A549 (cell line): ENCODE measurements at regions of chr2 and their contacts with region 1.

Region 1: GRCh38 chr2:84919885-84920580 is 14.6 kb downstream of the TMSB10 start:
- DNase-seq: peak; percentile 88 to 98
- ATAC-seq: peak; percentile 92 to 97
- H3K4me3 ChIP-seq: 0 out of 3 replicates have a peak overlapping the region, but pooled peaks have one; percentile 1
- H3K27ac ChIP-seq: peak overlapping the region; percentile 84 to 96
- H3K4me1 ChIP-seq: peaks cover 33% of the 10 kb centered on the region
- CTCF ChIP-seq: no peak
- EP300 ChIP-seq: peak; percentile 34 to 72; a peak in 2 of 5 replicates
- POLR2A ChIP-seq: no peak
- RAD21 ChIP-seq: no peak

Region 2: DNA sequence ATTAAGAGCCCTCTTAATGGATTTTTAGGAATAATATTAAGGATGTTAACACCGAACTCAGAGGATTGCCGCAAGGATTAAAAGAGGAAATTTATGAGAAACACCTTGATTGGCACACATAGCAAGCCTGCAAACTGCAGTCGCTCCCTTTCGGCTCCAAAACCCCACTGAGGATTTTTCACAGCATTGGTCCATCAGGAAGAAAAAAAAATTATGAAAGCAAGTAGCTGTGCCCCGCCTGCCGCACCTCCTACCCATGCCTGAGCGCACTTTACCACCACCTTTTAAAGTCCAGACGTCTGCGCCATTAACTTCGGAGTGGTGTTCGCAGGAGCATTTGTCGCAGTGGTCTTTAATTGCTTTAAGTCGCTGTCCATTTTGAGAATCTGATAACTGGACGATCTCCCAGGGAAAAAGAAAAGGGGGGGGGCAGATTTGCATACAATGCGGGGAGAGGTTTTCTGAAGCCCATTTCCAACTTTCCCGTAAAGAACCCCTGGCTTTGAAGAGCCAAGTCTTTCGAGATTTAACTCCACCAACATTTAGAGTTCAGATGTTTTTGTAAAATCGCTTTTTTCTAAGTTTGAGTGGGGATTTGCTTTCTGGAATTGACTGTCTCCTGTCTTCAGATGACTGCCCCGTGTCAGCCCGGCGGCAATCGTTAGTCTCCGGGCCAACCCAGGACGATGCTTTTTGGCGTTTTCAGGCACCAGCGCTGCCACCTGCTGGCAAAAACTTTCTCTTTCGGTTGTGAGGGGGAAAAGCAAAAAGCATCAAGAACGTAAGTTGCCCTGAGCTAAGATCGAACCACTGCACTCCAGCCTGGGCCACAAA is 38.2 kb before region 1 on chr2:
- CTCF ChIA-PET with region 1: interaction called, 41 read pairs
- POLR2A ChIA-PET with region 1: no interaction called
- DNase-seq: peak; percentile 86 to 88
- ATAC-seq: peak; percentile 71 to 88
- H3K4me3 ChIP-seq: peak overlapping the region; percentile 50
- H3K27ac ChIP-seq: peak overlapping the region; percentile 64 to 89; a peak in 5 of 6 replicates
- H3K4me1 ChIP-seq: peaks cover 3% of the 10 kb centered on the region
- CTCF ChIP-seq: peak; percentile 86
- EP300 ChIP-seq: no peak
- POLR2A ChIP-seq: no peak
- RAD21 ChIP-seq: peak; percentile 83 to 84

Region 3: DNA sequence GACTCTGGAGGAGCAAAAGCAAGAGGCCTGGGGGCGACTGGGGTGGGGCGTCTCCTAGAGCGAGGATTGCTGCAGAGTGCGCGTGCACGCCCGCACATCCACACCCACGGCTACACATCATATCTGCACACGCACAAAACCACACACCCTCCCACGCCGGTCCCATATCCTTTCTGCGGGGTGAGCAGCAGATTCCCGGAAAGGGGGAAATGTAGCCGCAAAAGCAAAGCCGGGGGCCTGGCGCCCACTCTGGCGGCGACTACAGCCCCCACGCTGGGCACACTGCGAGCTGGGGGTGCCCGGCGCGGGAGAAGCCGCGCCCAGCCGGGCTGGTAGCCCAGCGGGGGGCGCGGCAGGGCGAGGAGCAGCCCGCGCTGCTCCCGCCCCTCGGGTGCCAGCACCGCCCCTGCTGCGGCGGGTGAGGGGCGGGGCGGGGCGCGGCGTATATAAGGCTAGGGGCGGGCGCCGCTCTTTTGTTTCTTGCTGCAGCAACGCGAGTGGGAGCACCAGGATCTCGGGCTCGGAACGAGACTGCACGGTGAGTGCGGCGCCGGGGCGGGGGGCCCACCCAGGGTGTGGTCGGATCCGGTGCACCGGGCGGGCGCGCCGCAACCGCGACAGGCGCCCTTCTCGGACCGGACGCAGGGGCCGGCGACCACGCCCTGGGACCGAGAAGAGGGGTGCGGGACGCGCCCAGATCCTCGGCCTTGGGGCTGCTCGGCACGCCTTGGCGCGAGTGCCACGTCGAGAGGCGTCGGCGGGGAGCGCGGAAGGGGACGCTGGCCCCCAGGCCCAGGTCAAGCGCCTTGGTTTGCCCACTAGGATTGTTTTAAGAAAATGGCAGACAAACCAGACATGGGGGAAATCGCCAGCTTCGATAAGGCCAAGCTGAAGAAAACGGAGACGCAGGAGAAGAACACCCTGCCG is 14.6 kb before region 1 on chr2 and contains the start of gene TMSB10:
- CTCF ChIA-PET with region 1: interaction called, 178 read pairs
- POLR2A ChIA-PET with region 1: interaction called, 131 read pairs
- DNase-seq: peak; percentile 82 to 91
- ATAC-seq: peak; percentile 60 to 70
- H3K4me3 ChIP-seq: peak within 1 kb of the TSS; percentile 87
- H3K27ac ChIP-seq: peak within 1 kb of the TSS; percentile 89 to 97
- H3K4me1 ChIP-seq: peaks cover 16% of the 10 kb centered on the region
- CTCF ChIP-seq: peak; percentile 30; the same call in 1 of the 3 replicates
- EP300 ChIP-seq: 0 out of 5 replicates have a peak, but pooled peaks of 1 of the 2 experiments have one; percentile 26
- POLR2A ChIP-seq: peak; percentile 98
- RAD21 ChIP-seq: peak in 1 of 2 experiments; percentile 37; a peak in 1 of 5 replicates
- polyA plus RNA-seq, gene TMSB10: 2,292 and 3,109 TPM in 2 replicates